CD4-positive, alpha-beta memory T cell (primary cell): ENCODE measurements at regions of chr22 and their contacts with region 1.

Region 1: DNA sequence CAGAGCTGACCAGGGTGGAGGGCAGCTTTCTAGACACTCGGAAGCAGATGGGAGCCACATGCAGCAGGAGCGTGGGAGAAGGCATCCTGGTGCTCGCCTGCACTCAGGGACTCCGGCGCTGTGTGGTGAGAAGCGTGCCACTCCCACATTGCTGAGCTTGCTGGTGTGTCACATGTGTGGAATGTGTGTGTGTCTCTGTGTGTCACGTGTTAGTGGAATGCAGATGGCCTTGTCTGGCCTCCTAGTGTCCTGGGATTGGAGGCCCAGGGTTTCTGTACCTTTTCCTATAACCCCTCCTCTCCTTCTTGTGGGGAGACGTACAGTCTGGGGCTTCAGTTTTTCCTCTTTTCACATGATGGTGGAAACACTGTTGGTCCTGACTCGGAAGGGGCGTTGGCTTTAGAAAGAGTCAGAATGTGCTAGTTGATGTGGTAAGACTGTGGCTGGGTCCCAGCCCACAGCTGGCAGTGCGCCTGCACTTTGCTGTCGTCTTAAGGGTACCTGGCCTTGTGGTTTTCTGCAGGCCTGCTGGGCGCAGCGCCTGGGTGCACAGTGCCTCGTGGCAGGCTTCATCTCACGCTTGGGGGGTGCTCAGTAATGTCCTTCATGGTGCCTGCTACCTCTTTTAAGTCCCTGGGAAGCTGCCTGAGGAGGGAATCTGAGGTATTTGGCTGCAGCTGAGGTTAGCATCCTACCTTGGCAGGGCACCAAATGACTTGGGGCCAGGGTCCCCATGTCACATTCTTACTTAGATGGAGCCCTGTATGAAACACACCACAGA is 61.8 kb downstream of the MED15 start:
- DNase-seq: peak; percentile 91 to 94 (median 93)
- H3K4me3 ChIP-seq: peak overlapping the region; percentile 14 to 47
- H3K4me3 Mint-ChIP-seq: peak overlapping the region; percentile 79 to 95 (median 89)
- H3K27ac ChIP-seq: peak overlapping the region; percentile 54
- H3K27ac Mint-ChIP-seq: peak overlapping the region; percentile 97 to 99 (median 99)
- H3K4me1 ChIP-seq: peaks cover 85% of the 10 kb centered on the region
- H3K4me1 Mint-ChIP-seq: peaks cover 56 to 95% (median 78%) of the 10 kb centered on the region in 4 donors
- H3K27me3 ChIP-seq: no peaks in the 10 kb centered on the region
- H3K27me3 Mint-ChIP-seq: no peaks in the 10 kb centered on the region

Region 2: DNA sequence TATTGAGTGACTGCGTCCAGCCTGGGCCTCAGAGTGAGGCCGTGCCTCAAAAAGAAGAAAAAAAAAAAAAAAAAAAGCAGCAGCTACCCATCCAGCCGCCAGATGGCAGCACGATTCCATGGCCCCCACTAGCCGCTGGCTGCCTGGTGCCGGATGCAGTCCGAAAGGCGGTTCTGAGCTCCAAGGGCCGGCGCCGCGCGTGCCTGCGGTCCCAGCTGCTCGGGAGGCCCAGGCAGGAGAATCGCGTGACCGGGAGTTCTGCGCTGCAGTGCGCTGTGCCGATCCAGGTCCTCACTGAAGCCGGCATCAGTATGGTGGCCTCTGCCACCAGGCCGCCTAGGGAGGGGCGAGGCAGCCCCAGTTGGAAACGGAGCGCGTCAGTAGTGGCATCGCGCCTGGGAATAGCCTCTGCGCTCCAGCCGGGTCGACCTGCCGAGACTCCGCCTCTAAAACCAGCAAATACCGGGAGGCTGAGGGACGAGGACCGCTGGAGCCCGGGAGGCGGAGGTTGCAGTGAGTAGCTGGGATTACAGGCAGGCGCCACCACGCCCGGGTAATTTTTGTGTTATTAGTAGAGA is 150.9 kb before region 1 on chr22:
- CTCF ChIA-PET with region 1: interaction called, 15 read pairs
- POLR2A ChIA-PET with region 1: interaction called, 4 read pairs
- intact Hi-C with region 1: loop called (anchors 5 kb)
- DNase-seq: peak; percentile 67 to 74 (median 69)
- H3K4me3 ChIP-seq: peak overlapping the region in 1 of 2 donors; percentile 51
- H3K4me3 Mint-ChIP-seq: peak overlapping the region in 7 of 8 donors; percentile 39 to 74 (median 70)
- H3K27ac ChIP-seq: no peak overlapping the region
- H3K27ac Mint-ChIP-seq: peak overlapping the region in 1 of 7 donors; percentile 35
- H3K4me1 ChIP-seq: peaks cover 6% of the 10 kb centered on the region
- H3K4me1 Mint-ChIP-seq: peaks cover 0 to 8% (median 3%) of the 10 kb centered on the region in 4 donors
- H3K27me3 ChIP-seq: no peaks in the 10 kb centered on the region
- H3K27me3 Mint-ChIP-seq: no peaks in the 10 kb centered on the region

Region 3: GRCh38 chr22:20475115-20475436 is 94.1 kb before region 1 on chr22:
- CTCF ChIA-PET with region 1: no interaction called
- POLR2A ChIA-PET with region 1: no interaction called
- intact Hi-C with region 1: no loop called
- DNase-seq: no peak
- H3K4me3 ChIP-seq: no peak overlapping the region
- H3K4me3 Mint-ChIP-seq: peak overlapping the region; percentile 23 to 77 (median 66)
- H3K27ac ChIP-seq: no peak overlapping the region
- H3K27ac Mint-ChIP-seq: peak overlapping the region; percentile 80 to 87 (median 84)
- H3K4me1 ChIP-seq: peaks cover 22% of the 10 kb centered on the region
- H3K4me1 Mint-ChIP-seq: peaks cover 26 to 48% (median 37%) of the 10 kb centered on the region in 4 donors
- H3K27me3 ChIP-seq: no peaks in the 10 kb centered on the region
- H3K27me3 Mint-ChIP-seq: no peaks in the 10 kb centered on the region

Region 4: GRCh38 chr22:20523086-20523983 is 45.8 kb before region 1 on chr22:
- CTCF ChIA-PET with region 1: interaction called, 12 read pairs
- POLR2A ChIA-PET with region 1: interaction called, 12 read pairs
- intact Hi-C with region 1: no loop called
- DNase-seq: peak; percentile 11 to 50 (median 22)
- H3K4me3 ChIP-seq: no peak overlapping the region
- H3K4me3 Mint-ChIP-seq: peak overlapping the region in 7 of 8 donors; percentile 50 to 87 (median 71)
- H3K27ac ChIP-seq: peak overlapping the region; percentile 11
- H3K27ac Mint-ChIP-seq: peak overlapping the region; percentile 77 to 97 (median 93)
- H3K4me1 ChIP-seq: peaks cover 75% of the 10 kb centered on the region
- H3K4me1 Mint-ChIP-seq: peaks cover 48 to 80% (median 64%) of the 10 kb centered on the region in 4 donors
- H3K27me3 ChIP-seq: no peaks in the 10 kb centered on the region
- H3K27me3 Mint-ChIP-seq: no peaks in the 10 kb centered on the region

Region 5: DNA sequence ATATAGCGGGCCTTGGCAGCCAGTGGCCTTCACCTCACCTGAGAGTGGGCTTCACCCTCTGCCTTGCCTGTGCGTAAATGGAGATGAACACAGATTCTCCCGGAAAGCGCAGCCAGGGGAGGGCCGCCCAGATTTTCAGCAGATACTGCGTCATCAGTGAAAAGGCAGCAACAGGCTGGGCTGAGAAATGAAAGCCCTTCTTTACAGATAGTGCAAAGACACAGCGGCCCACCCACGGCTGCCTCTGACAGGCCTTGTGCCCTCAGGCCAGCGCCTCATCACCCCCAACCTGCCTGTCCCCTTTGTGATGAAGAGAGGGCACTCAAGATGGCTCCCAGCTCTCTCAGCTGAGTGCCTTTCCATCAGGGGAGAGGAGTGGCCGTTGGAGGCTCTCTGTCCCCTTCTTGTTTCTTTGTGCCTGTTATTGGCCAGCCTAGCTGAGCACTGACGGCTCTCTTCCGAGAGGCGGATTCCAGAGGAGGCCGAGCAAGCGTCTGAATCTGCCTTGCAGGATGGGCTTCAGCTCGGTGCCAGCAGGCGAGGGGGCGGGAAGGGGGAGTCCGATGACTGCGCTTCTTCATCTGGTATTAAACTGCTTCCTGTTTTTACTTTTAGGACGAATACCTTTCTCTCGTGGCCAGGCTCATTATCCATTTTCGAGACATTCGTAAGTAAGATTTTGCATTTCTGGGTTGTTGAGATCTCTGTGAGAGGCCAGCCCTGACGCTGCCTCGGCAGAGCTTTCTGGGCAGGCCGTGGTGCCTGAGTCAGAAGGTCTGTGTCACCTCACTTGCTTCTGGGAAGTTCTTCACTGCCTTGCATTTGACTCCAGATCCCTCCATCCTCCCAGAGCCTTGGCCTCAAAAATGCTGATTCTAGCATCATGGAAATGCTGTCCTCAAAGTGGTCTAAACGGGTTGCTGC is 18.1 kb before region 1 on chr22:
- CTCF ChIA-PET with region 1: interaction called, 374 read pairs
- POLR2A ChIA-PET with region 1: interaction called, 650 read pairs
- intact Hi-C with region 1: loop called (anchors 1 kb)
- DNase-seq: peak; percentile 45 to 73 (median 57)
- H3K4me3 ChIP-seq: peak overlapping the region; percentile 7 to 15
- H3K4me3 Mint-ChIP-seq: peak overlapping the region; percentile 84 to 89 (median 88)
- H3K27ac ChIP-seq: peak overlapping the region; percentile 75
- H3K27ac Mint-ChIP-seq: peak overlapping the region; percentile 92 to 99 (median 98)
- H3K4me1 ChIP-seq: peaks cover 91% of the 10 kb centered on the region
- H3K4me1 Mint-ChIP-seq: peaks cover 58 to 92% (median 76%) of the 10 kb centered on the region in 4 donors
- H3K27me3 ChIP-seq: no peaks in the 10 kb centered on the region
- H3K27me3 Mint-ChIP-seq: no peaks in the 10 kb centered on the region

Region 6: DNA sequence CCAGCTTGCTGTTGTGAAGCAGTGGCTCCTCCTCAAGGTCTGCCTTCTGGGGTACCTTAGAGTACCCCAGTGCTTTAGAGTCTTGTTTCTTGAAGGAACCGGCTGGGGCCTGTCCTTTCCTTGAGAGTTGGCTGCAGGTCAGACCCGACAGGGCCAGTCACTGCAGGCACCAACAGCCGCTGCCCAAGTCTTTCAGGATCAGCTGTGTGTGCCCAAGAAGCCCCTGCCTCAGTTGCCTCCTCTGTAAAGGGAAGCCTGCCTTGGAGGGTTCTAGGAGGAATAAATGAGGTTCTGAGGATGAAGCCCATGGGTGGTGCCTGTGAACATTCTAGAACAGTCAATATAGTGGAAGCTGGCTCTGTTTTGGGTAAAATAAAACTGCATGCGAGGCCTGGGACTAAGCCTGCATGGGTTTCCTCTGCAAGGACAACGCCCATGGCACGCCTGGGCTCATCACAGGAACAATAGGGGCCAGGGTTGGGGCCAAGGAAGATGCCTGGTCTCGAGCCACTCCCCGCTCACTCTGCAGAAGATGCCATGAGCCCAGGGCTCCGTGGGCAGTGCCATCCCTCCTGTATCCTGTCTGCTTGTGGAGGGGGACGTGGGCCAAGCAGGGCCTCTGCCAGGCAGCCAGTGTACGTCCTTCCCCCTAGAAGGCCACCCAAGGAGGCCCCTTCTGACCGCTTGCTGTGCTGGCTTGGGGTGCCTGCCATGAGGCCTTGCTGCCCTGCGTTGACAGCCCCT is 19.8 kb after region 1 on chr22:
- CTCF ChIA-PET with region 1: interaction called, 7 read pairs
- POLR2A ChIA-PET with region 1: interaction called, 4 read pairs
- intact Hi-C with region 1: loop called (anchors 2 kb)
- DNase-seq: no peak
- H3K4me3 ChIP-seq: no peak overlapping the region
- H3K4me3 Mint-ChIP-seq: no peak overlapping the region
- H3K27ac ChIP-seq: no peak overlapping the region
- H3K27ac Mint-ChIP-seq: peak overlapping the region in 5 of 7 donors; percentile 10 to 58 (median 35)
- H3K4me1 ChIP-seq: no peaks in the 10 kb centered on the region
- H3K4me1 Mint-ChIP-seq: peaks cover 2 to 8% (median 6%) of the 10 kb centered on the region in 4 donors
- H3K27me3 ChIP-seq: no peaks in the 10 kb centered on the region
- H3K27me3 Mint-ChIP-seq: no peaks in the 10 kb centered on the region

Region 7: GRCh38 chr22:20885557-20886323 is 316.6 kb after region 1 on chr22:
- CTCF ChIA-PET with region 1: no interaction called
- POLR2A ChIA-PET with region 1: no interaction called
- intact Hi-C with region 1: no loop called
- DNase-seq: peak in 3 of 5 donors; percentile 9 to 15 (median 10)
- H3K4me3 ChIP-seq: no peak overlapping the region
- H3K4me3 Mint-ChIP-seq: no peak overlapping the region
- H3K27ac ChIP-seq: no peak overlapping the region
- H3K27ac Mint-ChIP-seq: peak overlapping the region in 1 of 7 donors; percentile 11
- H3K4me1 ChIP-seq: no peaks in the 10 kb centered on the region
- H3K4me1 Mint-ChIP-seq: peaks cover 0 to 1% (median 0%) of the 10 kb centered on the region in 4 donors
- H3K27me3 ChIP-seq: no peaks in the 10 kb centered on the region
- H3K27me3 Mint-ChIP-seq: no peaks in the 10 kb centered on the region